ENCODE measurements at regions of chr19 and their contacts with region 1.

Region 1: DNA sequence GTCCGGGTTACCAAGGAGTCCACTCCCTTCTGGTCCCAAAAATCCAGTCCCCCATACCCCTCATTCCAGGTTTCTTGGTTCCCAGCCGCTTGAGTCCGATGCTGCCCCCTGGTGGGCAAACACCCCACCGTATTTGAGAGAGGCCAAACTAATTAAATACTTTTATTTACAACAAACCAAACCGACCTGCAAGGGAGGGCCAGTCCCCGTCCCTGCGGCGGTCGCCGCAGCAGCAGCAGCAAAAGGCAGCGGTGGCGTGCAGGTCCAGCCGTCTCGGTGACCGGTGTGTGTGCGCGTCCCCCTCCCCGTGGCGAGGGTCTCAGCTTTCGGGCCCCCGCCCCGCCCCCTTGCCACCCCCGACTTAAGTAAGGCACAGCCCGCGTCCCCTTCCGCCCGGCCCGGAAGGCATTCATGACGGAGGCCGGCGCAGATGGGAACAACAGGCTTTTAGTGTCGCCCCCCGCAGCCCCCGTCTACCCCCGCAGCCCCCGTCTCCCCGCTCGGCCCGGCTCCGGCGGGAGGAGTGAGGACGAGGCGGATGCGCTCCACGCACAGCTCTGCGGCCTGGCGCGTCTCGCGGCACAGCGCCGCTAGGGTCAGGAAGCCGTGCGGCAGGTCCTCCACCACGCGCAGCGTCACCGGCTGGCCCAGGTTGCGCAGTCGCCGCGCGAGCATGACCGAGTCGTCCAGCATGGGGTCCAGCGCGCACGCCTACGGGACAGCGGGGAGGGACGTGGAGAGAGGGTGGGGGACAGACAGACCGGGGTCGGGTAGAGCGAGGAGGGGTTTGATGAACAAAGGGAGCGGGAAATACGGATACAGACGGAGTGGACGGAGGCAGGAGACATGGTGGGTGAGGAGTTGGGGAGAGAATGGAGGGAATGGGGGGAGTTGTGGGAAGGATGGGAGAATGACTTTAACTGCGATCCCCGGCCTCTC is 11.5 kb upstream of the CNFN start:
- DNase-seq: no peak
- H3K4me3 ChIP-seq: peak overlapping the region; percentile 61
- CTCF ChIP-seq: peak; percentile 74

Region 2: DNA sequence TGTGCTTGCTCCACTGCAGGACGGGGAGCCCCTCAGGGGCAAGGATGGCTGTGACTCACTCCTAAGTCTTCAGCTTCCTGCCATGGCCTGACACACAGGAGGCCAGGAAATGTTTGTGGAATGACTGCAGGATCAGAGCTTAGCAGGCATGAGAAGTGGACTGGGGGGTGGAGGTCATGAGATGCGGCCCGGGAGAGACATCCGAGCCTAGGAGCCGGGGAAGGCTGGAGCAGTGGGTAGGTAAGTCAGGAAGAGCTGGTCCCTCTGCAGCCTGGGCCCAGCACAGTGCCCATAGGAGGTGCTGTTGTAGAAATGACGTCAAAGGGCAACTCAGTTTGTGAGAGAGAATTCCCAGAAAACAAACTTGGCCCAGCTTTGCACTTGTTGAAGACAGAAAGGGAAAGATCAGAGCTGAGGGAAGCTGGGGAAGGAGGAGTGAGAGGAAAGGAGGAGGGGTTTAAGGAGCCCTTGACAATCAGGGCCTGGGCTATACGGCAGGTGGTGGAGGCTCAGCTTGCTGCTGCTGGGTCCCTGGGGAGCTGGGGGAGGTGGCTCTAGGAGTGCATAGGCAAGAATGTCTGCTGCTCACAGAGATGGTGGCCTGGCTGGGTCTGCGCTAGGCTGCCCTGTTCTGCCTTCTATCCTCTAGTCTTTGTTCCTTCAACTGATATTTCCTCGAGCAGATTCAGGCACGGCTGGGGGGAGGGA is 287.8 kb before region 1 on chr19:
- CTCF ChIA-PET with region 1: interaction called, 10 read pairs
- POLR2A ChIA-PET with region 1: no interaction called
- DNase-seq: peak; percentile 91
- H3K4me3 ChIP-seq: peak overlapping the region; percentile 10; the same call in 1 of the 2 replicates
- CTCF ChIP-seq: peak; percentile 32

Region 3: DNA sequence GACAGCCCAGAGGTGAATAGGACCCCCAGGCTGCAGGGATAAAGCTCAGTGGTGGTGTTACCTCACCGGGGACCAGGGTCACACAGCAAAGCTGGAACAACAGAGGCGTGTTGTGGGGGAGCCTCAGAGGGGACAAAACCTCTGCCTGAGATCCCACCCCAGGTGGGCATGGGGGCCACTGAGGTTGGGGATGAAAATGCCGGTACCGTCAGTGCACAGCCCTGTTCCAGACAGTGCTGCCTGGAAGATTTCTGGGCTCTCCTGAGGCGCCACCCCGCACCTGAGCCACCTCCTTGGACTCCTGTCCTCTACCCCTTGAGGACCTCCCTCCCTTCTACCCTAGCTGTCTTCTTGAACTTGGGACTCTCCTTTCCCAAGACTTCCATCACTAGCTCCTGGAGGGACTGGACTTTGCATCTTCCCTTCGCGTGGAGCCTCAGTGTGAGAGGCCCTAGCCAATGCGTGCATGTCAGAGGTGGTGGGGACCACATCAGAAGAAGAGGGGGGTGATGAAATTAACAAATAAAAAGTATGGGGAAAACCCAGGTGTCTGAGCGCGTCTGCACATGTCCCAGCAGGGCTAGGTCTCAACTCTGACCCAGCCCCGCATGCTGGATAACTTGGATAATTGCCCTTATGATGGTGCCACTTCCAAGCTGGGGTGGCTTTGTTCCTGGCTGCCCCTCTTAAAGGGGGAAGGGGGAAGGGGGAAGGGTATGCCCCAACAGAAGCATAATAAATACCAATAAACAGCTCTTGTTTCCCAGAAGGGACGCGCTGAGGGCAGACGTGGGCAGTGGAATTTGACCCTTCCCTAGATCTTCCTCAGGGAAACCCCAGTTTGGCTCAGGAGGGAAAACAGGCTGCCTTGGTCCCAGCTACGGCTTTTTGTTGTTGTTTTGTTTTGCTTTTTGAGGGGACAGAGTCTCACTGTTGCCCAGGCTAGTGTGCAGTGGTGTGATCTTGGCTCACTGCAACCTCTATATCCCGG is 23.1 kb before region 1 on chr19:
- CTCF ChIA-PET with region 1: interaction called, 16 read pairs
- POLR2A ChIA-PET with region 1: interaction called, 4 read pairs
- DNase-seq: no peak
- H3K4me3 ChIP-seq: no peak overlapping the region
- CTCF ChIP-seq: no peak

Region 4: GRCh38 chr19:42386974-42387707 is 14.5 kb before region 1 on chr19:
- CTCF ChIA-PET with region 1: interaction called, 22 read pairs
- POLR2A ChIA-PET with region 1: no interaction called
- DNase-seq: no peak
- H3K4me3 ChIP-seq: peak overlapping the region; percentile 52
- CTCF ChIP-seq: peak; percentile 63

Region 5: GRCh38 chr19:42412227-42412626 is 10.6 kb after region 1 on chr19:
- CTCF ChIA-PET with region 1: interaction called, 34 read pairs
- POLR2A ChIA-PET with region 1: no interaction called
- DNase-seq: no peak
- H3K4me3 ChIP-seq: no peak overlapping the region
- CTCF ChIP-seq: no peak